ENCODE measurements at regions of chr5 and their contacts with region 1.

Region 1: GRCh38 chr5:902129-902916 is 9.6 kb downstream of the TRIP13 start:
- DNase-seq: peak in 1 of 2 donors; percentile 14
- ATAC-seq: no peak

Region 2: GRCh38 chr5:350355-350754 is 552.0 kb before region 1 on chr5:
- intact Hi-C with region 1: no loop called
- DNase-seq: no peak
- ATAC-seq: no peak

Region 3: GRCh38 chr5:671459-672328 is 230.6 kb before region 1 on chr5:
- intact Hi-C with region 1: loop called in 1 of 2 experiments (anchors 5 kb)
- DNase-seq: peak; percentile 72 to 83
- ATAC-seq: peak; percentile 85